ENCODE measurements at regions of chr2 and their contacts with region 1.

Region 1: GRCh38 chr2:43484323-43484930 is 111.4 kb downstream of the THADA start:
- DNase-seq: peak; percentile 73
- ATAC-seq: peak; percentile 60; the same call in 1 of the 2 replicates
- H3K4me3 ChIP-seq: no peak overlapping the region
- H3K27ac ChIP-seq: no peak overlapping the region
- H3K4me1 ChIP-seq: peaks cover 0 to 5% of the 10 kb centered on the region in 2 experiments; a peak in 1 of 4 replicates
- H3K27me3 ChIP-seq: no peaks in the 10 kb centered on the region
- CTCF ChIP-seq: peak; percentile 43 to 78 (median 73); a peak in 5 of 6 replicates
- POLR2A ChIP-seq: no peak
- RAD21 ChIP-seq: peak; percentile 87

Region 2: GRCh38 chr2:42828487-42829425 is 655.7 kb before region 1 on chr2:
- CTCF ChIA-PET with region 1: no interaction called
- POLR2A ChIA-PET with region 1: no interaction called
- RAD21 ChIA-PET with region 1: no interaction called
- intact Hi-C with region 1: loop called (anchors 2 kb)
- DNase-seq: peak; percentile 54
- ATAC-seq: peak; percentile 86
- H3K4me3 ChIP-seq: no peak overlapping the region
- H3K27ac ChIP-seq: no peak overlapping the region
- H3K4me1 ChIP-seq: peaks cover 0 to 12% of the 10 kb centered on the region in 2 experiments; a peak in 1 of 4 replicates
- H3K27me3 ChIP-seq: no peaks in the 10 kb centered on the region
- CTCF ChIP-seq: peak; percentile 75 to 92 (median 90)
- POLR2A ChIP-seq: no peak
- RAD21 ChIP-seq: peak; percentile 82

Region 3: GRCh38 chr2:42859006-42859552 is 625.3 kb before region 1 on chr2:
- CTCF ChIA-PET with region 1: interaction called, 5 read pairs
- POLR2A ChIA-PET with region 1: no interaction called
- RAD21 ChIA-PET with region 1: no interaction called
- intact Hi-C with region 1: loop called (anchors 1 kb)
- DNase-seq: peak; percentile 69
- ATAC-seq: peak; percentile 75
- H3K4me3 ChIP-seq: no peak overlapping the region
- H3K27ac ChIP-seq: no peak overlapping the region
- H3K4me1 ChIP-seq: no peaks in the 10 kb centered on the region
- H3K27me3 ChIP-seq: no peaks in the 10 kb centered on the region
- CTCF ChIP-seq: peak; percentile 87 to 96 (median 91)
- POLR2A ChIP-seq: no peak
- RAD21 ChIP-seq: peak; percentile 93

Region 4: GRCh38 chr2:42974721-42975717 is 509.4 kb before region 1 on chr2:
- CTCF ChIA-PET with region 1: interaction called, 6 read pairs
- POLR2A ChIA-PET with region 1: no interaction called
- RAD21 ChIA-PET with region 1: interaction called in 1 of 2 experiments, 4 read pairs
- intact Hi-C with region 1: loop called (anchors 2 kb)
- DNase-seq: peak; percentile 6
- ATAC-seq: peak; percentile 92
- H3K4me3 ChIP-seq: peak overlapping the region in 1 of 2 experiments; percentile 11; a peak in 1 of 4 replicates
- H3K27ac ChIP-seq: no peak overlapping the region
- H3K4me1 ChIP-seq: peaks cover 0 to 4% of the 10 kb centered on the region in 2 experiments; a peak in 1 of 4 replicates
- H3K27me3 ChIP-seq: no peaks in the 10 kb centered on the region
- CTCF ChIP-seq: peak; percentile 83 to 86 (median 84)
- POLR2A ChIP-seq: no peak
- RAD21 ChIP-seq: peak; percentile 97

Region 5: GRCh38 chr2:43131024-43131889 is 353.2 kb before region 1 on chr2:
- CTCF ChIA-PET with region 1: interaction called, 8 read pairs
- POLR2A ChIA-PET with region 1: no interaction called
- RAD21 ChIA-PET with region 1: no interaction called
- intact Hi-C with region 1: loop called (anchors 1 kb)
- DNase-seq: peak; percentile 89
- ATAC-seq: peak; percentile 80
- H3K4me3 ChIP-seq: peak overlapping the region; percentile 25 to 41
- H3K27ac ChIP-seq: peak overlapping the region; percentile 65
- H3K4me1 ChIP-seq: peaks cover 20 to 23% of the 10 kb centered on the region in 2 experiments
- H3K27me3 ChIP-seq: no peaks in the 10 kb centered on the region
- CTCF ChIP-seq: peak in 2 of 3 experiments; percentile 62 to 71; a peak in 4 of 6 replicates
- POLR2A ChIP-seq: no peak
- RAD21 ChIP-seq: no peak

Region 6: GRCh38 chr2:43239981-43240761 is 244.3 kb before region 1 on chr2:
- CTCF ChIA-PET with region 1: interaction called, 11 read pairs
- POLR2A ChIA-PET with region 1: no interaction called
- RAD21 ChIA-PET with region 1: no interaction called
- intact Hi-C with region 1: no loop called
- DNase-seq: no peak
- ATAC-seq: peak; percentile 76
- H3K4me3 ChIP-seq: no peak overlapping the region
- H3K27ac ChIP-seq: no peak overlapping the region
- H3K4me1 ChIP-seq: peaks cover 0 to 2% of the 10 kb centered on the region in 2 experiments; a peak in 1 of 4 replicates
- H3K27me3 ChIP-seq: no peaks in the 10 kb centered on the region
- CTCF ChIP-seq: peak; percentile 31 to 44 (median 41); a peak in 4 of 6 replicates
- POLR2A ChIP-seq: no peak
- RAD21 ChIP-seq: peak; percentile 41; the same call in 1 of the 2 replicates